Heart left ventricle (tissue), 16 donors: ENCODE measurements at regions of chr16 and their contacts with region 1.

Region 1: GRCh38 chr16:69890114-69890891 is 60.8 kb upstream of the CLEC18A start:
- DNase-seq: peak; percentile 62 to 72 (median 64)
- ATAC-seq: peak; percentile 78 to 93 (median 91)
- H3K4me3 ChIP-seq: peak overlapping the region in 1 of 12 donors; percentile 13
- H3K27ac ChIP-seq: peak overlapping the region; percentile 59 to 90 (median 81)
- H3K4me1 ChIP-seq: peaks cover 0 to 22% (median 10%) of the 10 kb centered on the region in 12 donors
- H3K27me3 ChIP-seq: no peaks in the 10 kb centered on the region
- CTCF ChIP-seq: no peak
- POLR2A ChIP-seq: peak in 1 of 2 donors; percentile 11

Region 2: GRCh38 chr16:69839798-69840409 is 50.4 kb before region 1 on chr16:
- intact Hi-C with region 1: no loop called
- DNase-seq: peak; percentile 30 to 68 (median 66)
- ATAC-seq: peak; percentile 68 to 86 (median 82)
- H3K4me3 ChIP-seq: no peak overlapping the region
- H3K27ac ChIP-seq: peak overlapping the region in 11 of 12 donors; percentile 58 to 90 (median 80)
- H3K4me1 ChIP-seq: peaks cover 6 to 46% (median 31%) of the 10 kb centered on the region in 12 donors
- H3K27me3 ChIP-seq: no peaks in the 10 kb centered on the region
- CTCF ChIP-seq: no peak
- POLR2A ChIP-seq: no peak

Region 3: GRCh38 chr16:69906838-69907401 is 16.6 kb after region 1 on chr16:
- intact Hi-C with region 1: no loop called
- DNase-seq: no peak
- ATAC-seq: no peak
- H3K4me3 ChIP-seq: no peak overlapping the region
- H3K27ac ChIP-seq: no peak overlapping the region
- H3K4me1 ChIP-seq: no peaks in the 10 kb centered on the region
- H3K27me3 ChIP-seq: no peaks in the 10 kb centered on the region
- CTCF ChIP-seq: no peak
- POLR2A ChIP-seq: no peak

Region 4: GRCh38 chr16:69930117-69930776 is 39.9 kb after region 1 on chr16:
- intact Hi-C with region 1: loop called in 1 of 10 experiments (anchors 2 kb)
- DNase-seq: peak in 4 of 5 donors; percentile 50 to 72 (median 58)
- ATAC-seq: peak; percentile 64 to 80 (median 77)
- H3K4me3 ChIP-seq: no peak overlapping the region
- H3K27ac ChIP-seq: peak overlapping the region in 1 of 12 donors; percentile 6
- H3K4me1 ChIP-seq: peaks cover 3 to 51% (median 28%) of the 10 kb centered on the region in 12 donors
- H3K27me3 ChIP-seq: no peaks in the 10 kb centered on the region
- CTCF ChIP-seq: peak; percentile 69 to 87 (median 78)
- POLR2A ChIP-seq: no peak

Region 5: GRCh38 chr16:69941251-69942098 is 51.2 kb after region 1 on chr16:
- intact Hi-C with region 1: no loop called
- DNase-seq: peak in 2 of 5 donors; percentile 18 to 22
- ATAC-seq: no peak
- H3K4me3 ChIP-seq: no peak overlapping the region
- H3K27ac ChIP-seq: no peak overlapping the region
- H3K4me1 ChIP-seq: peaks cover 0 to 9% (median 0%) of the 10 kb centered on the region in 12 donors
- H3K27me3 ChIP-seq: no peaks in the 10 kb centered on the region
- CTCF ChIP-seq: no peak
- POLR2A ChIP-seq: no peak